Adrenal gland (tissue), 19 donors: ENCODE measurements at regions of chr6 and their contacts with region 1.

Region 1: GRCh38 chr6:91540902-91541301 is 954.0 kb upstream of the MAP3K7 start:
- DNase-seq: no peak
- H3K4me3 ChIP-seq: no peak overlapping the region
- H3K27ac ChIP-seq: no peak overlapping the region
- H3K4me1 ChIP-seq: no peaks in the 10 kb centered on the region
- H3K27me3 ChIP-seq: no peaks in the 10 kb centered on the region
- CTCF ChIP-seq: no peak
- POLR2A ChIP-seq: no peak

Region 2: DNA sequence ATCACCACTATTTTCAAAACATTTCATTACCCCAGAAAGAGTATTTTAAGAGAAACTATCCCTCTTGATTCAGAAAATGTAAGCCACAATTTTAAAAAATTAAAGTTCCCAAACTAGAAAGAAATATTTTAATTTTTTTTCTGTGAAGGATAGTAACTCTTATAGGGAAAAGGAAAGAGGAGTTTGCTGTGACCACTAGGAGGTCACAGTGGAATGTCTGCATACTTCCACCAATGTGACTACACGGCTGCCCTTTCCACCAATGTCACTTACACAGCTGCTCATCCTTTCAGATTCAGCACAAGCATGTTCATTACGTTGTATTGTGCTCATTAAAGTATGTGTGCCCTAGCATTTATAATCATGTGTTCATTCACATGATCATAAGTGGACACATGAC is 19.6 kb before region 1 on chr6:
- intact Hi-C with region 1: loop called in 1 of 2 experiments (anchors 2 kb)
- DNase-seq: no peak
- H3K4me3 ChIP-seq: no peak overlapping the region
- H3K27ac ChIP-seq: no peak overlapping the region
- H3K4me1 ChIP-seq: no peaks in the 10 kb centered on the region
- H3K27me3 ChIP-seq: no peaks in the 10 kb centered on the region
- CTCF ChIP-seq: no peak
- POLR2A ChIP-seq: no peak